CD8-positive, alpha-beta memory T cell (primary cell): ENCODE measurements at regions of chr17 and their contacts with region 1.

Region 1: GRCh38 chr17:14294876-14295275 is 6.0 kb upstream of the HS3ST3B1 start:
- DNase-seq: no peak
- H3K4me3 ChIP-seq: no peak overlapping the region
- H3K4me3 Mint-ChIP-seq: peak overlapping the region in 2 of 7 donors; percentile 1 to 77
- H3K27ac ChIP-seq: no peak overlapping the region
- H3K27ac Mint-ChIP-seq: peak overlapping the region in 1 of 8 donors; percentile 44
- H3K4me1 ChIP-seq: peaks cover 25% of the 10 kb centered on the region
- H3K4me1 Mint-ChIP-seq: peaks cover 36 to 44% (median 42%) of the 10 kb centered on the region in 3 donors
- H3K27me3 ChIP-seq: peaks cover 28% of the 10 kb centered on the region
- H3K27me3 Mint-ChIP-seq: peaks cover 47 to 85% of the 10 kb centered on the region in 2 donors

Region 2: DNA sequence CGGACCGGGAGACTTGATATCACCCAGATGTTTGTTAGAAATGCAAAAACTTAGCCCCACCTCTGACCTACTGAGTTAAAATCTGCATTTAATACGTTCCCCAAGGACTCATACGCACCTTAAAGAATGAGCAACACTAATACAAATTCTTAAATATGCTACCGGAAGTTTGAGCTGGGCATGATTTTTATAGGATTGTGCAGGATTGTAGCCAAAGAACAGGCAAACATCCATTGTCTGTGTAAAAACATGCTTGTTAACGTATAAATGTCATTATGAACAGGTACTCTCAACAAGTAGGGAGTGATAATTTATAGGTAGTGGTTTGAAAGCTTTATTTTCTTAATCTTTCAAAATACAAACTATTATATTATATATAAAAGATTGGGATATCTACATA is 247.9 kb before region 1 on chr17:
- CTCF ChIA-PET with region 1: no interaction called
- POLR2A ChIA-PET with region 1: interaction called, 10 read pairs
- DNase-seq: no peak
- H3K4me3 ChIP-seq: no peak overlapping the region
- H3K4me3 Mint-ChIP-seq: no peak overlapping the region
- H3K27ac ChIP-seq: no peak overlapping the region
- H3K27ac Mint-ChIP-seq: no peak overlapping the region
- H3K4me1 ChIP-seq: no peaks in the 10 kb centered on the region
- H3K4me1 Mint-ChIP-seq: peaks cover 8 to 23% (median 8%) of the 10 kb centered on the region in 3 donors
- H3K27me3 ChIP-seq: no peaks in the 10 kb centered on the region
- H3K27me3 Mint-ChIP-seq: no peaks in the 10 kb centered on the region

Region 3: DNA sequence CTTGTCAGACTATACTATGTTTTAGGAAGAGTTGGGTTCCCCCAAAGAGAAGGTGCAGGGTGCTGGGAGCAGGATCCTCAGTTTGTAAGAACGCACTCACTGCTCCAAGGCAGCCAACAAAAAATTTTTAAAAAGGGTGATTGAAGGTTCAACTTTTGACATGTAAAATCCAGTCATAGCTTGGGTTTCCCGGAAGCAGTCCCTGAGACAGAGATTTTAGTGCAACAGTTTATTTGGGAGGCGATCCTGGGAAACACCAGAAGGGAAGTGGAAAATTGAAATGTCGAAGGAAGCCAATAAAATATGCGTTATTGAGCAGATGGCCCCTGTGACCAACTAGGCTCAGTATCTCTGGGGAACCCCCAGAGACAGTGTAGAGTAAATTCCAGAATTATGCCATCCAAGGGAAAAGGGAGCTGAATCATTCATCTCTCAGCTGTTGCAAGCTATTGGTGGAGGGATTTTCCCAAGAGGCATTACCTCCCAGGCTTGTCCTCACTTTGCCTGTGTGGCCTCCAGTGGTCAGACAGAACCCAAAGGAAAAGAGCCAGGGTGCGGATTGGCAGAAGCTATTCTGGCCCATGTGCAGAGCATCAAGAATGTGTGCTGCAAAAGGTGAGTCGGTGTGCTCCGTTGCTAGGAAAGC is 78.9 kb after region 1 on chr17:
- CTCF ChIA-PET with region 1: no interaction called
- POLR2A ChIA-PET with region 1: no interaction called
- DNase-seq: no peak
- H3K4me3 ChIP-seq: no peak overlapping the region
- H3K4me3 Mint-ChIP-seq: no peak overlapping the region
- H3K27ac ChIP-seq: no peak overlapping the region
- H3K27ac Mint-ChIP-seq: no peak overlapping the region
- H3K4me1 ChIP-seq: no peaks in the 10 kb centered on the region
- H3K4me1 Mint-ChIP-seq: peaks cover 0 to 2% (median 0%) of the 10 kb centered on the region in 3 donors
- H3K27me3 ChIP-seq: no peaks in the 10 kb centered on the region
- H3K27me3 Mint-ChIP-seq: peaks cover 0 to 1% of the 10 kb centered on the region in 2 donors

Region 4: GRCh38 chr17:14387036-14387435 is 92.2 kb after region 1 on chr17:
- CTCF ChIA-PET with region 1: no interaction called
- POLR2A ChIA-PET with region 1: no interaction called
- DNase-seq: no peak
- H3K4me3 ChIP-seq: no peak overlapping the region
- H3K4me3 Mint-ChIP-seq: no peak overlapping the region
- H3K27ac ChIP-seq: no peak overlapping the region
- H3K27ac Mint-ChIP-seq: no peak overlapping the region
- H3K4me1 ChIP-seq: no peaks in the 10 kb centered on the region
- H3K4me1 Mint-ChIP-seq: no peaks in the 10 kb centered on the region
- H3K27me3 ChIP-seq: no peaks in the 10 kb centered on the region
- H3K27me3 Mint-ChIP-seq: peaks cover 0 to 4% of the 10 kb centered on the region in 2 donors

Region 5: DNA sequence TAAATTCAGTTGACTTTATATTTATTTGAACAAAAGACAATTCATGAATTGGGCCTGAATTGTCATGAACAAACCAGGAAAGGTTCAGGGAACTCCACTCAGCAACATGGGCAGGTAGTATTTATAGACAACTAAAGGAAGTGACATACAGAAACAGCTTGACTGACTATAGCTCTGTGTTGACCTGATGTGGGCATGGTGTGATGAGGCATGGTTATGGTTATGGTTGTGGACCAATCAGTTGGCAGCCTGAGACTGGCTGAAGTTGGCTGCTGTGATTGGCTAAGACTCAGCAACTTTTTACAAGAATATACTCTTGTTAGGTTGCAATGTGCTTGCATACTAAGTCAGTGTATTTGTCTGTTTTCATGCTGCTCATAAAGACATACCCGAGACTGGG is 114.4 kb after region 1 on chr17:
- CTCF ChIA-PET with region 1: no interaction called
- POLR2A ChIA-PET with region 1: no interaction called
- DNase-seq: no peak
- H3K4me3 ChIP-seq: no peak overlapping the region
- H3K4me3 Mint-ChIP-seq: no peak overlapping the region
- H3K27ac ChIP-seq: no peak overlapping the region
- H3K27ac Mint-ChIP-seq: no peak overlapping the region
- H3K4me1 ChIP-seq: peaks cover 10% of the 10 kb centered on the region
- H3K4me1 Mint-ChIP-seq: peaks cover 12 to 16% (median 16%) of the 10 kb centered on the region in 3 donors
- H3K27me3 ChIP-seq: no peaks in the 10 kb centered on the region
- H3K27me3 Mint-ChIP-seq: peaks cover 0 to 4% of the 10 kb centered on the region in 2 donors